Testis (tissue), 5 donors: ENCODE measurements at regions of chr12 and their contacts with region 1.

Region 1: DNA sequence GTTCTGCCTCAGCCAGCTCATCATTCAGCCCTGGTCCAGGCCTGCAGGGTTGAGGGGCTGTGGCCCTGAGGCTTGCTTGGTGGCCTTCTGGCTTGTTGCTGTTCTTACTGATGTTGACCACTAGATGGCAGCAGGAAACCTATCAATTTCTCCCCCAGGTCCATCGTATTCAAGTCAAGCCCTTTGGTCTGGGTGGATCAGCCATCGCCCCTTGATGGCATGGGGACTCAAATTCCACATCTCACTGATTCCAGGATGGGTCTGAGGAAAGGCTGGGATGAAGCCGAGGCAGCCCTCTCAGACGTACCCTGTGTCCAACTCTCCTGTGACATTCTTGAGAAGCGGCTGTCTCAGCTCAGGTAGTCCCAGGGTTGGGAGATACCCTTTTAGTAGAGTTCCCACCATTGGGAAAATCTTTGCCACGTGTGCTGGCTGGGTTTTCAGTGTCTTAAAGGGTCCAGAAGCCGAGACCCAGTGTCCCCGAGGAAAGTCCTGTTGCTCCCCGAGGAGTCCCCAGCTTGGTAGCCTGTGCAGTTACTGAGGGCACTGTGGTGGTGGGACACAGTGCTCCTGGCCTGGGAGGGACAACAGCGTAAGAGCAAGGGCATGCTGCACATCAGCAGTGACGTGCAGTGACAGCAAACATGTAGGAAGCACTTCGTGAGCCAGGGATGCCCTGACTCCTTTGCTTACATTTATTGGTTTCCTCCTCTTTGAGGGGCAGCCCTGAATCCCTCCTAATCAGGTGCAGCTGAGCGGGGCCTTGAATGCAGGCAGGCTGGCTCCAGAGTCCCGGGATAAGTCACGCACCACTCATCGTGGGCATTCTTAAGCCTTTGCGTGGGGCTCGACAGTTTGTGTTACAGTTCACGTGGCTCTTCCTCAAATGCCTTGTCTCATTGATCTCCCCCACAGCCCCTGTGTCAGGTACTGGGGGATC is 58.6 kb downstream of the TSPAN9 start:
- DNase-seq: peak; percentile 65
- H3K4me3 ChIP-seq: no peak overlapping the region
- H3K27ac ChIP-seq: no peak overlapping the region
- H3K4me1 ChIP-seq: peaks cover 18% of the 10 kb centered on the region
- H3K27me3 ChIP-seq: no peaks in the 10 kb centered on the region
- CTCF ChIP-seq: peak; percentile 66 to 85 (median 80)
- POLR2A ChIP-seq: no peak

Region 2: GRCh38 chr12:3073438-3074250 is 62.1 kb before region 1 on chr12:
- intact Hi-C with region 1: loop called (anchors 10 kb)
- DNase-seq: peak; percentile 87
- H3K4me3 ChIP-seq: no peak overlapping the region
- H3K27ac ChIP-seq: no peak overlapping the region
- H3K4me1 ChIP-seq: peaks cover 11% of the 10 kb centered on the region
- H3K27me3 ChIP-seq: no peaks in the 10 kb centered on the region
- CTCF ChIP-seq: peak; percentile 89 to 99 (median 92)
- POLR2A ChIP-seq: no peak